ENCODE measurements at regions of chrX and their contacts with region 1.

Region 1: DNA sequence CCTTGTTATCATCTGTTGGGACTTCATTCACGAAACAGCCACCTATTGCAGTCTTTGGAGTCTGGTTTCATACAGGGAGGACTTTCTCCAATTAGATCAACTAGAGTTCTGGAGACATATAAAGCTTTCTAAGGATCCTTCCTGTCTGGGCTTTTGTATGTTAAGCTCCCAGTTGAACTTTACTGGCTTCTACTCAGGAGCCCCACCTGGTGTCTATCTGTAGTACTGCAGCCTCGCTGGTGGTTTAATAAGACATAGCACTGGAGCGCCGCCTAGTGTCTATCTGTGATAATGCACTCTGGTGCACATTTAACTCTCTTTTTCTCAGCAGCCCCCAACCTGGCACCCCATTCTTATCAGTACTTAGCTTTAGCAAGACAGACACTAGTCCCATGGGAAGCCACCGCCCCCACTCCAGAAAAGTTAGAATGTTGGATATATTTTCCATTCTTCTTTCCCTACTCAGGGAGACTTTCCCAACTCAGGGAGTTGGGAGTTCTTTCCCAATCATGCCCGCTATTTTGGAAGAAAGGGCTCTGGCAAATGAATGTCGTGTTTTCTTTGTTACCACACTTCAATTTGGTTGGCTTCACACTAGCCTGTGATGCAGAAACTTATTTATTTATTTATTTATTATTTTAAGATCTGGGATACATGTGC is 36.9 kb upstream of the SYTL4 start:
- DNase-seq: peak; percentile 81 to 86
- H3K4me3 ChIP-seq: no peak overlapping the region
- H3K27ac ChIP-seq: no peak overlapping the region
- H3K4me1 ChIP-seq: no peaks in the 10 kb centered on the region
- H3K27me3 ChIP-seq: no peaks in the 10 kb centered on the region
- CTCF ChIP-seq: peak; percentile 88 to 100 (median 99)
- POLR2A ChIP-seq: no peak

Region 2: DNA sequence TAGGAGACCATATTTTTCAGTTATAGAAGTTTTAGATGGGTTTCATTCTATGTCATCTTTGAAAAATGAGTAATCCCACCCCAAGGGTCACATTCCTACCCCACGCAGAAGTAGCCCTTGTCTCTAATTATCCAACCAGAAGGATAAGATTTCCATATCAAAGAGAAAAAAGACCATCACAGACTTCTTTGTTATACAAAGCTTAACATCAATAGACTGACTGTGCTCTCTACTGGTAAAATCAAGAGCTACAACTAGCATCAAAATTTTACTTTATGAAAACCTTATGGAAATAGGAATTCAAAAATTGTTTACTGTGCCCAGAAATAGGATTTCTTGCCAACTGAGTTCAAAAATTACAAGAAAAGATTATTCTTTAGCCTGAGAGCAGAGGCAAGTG is 159.2 kb before region 1 on chrX:
- intact Hi-C with region 1: no loop called
- DNase-seq: no peak
- H3K4me3 ChIP-seq: no peak overlapping the region
- H3K27ac ChIP-seq: no peak overlapping the region
- H3K4me1 ChIP-seq: no peaks in the 10 kb centered on the region
- H3K27me3 ChIP-seq: no peaks in the 10 kb centered on the region
- CTCF ChIP-seq: no peak
- POLR2A ChIP-seq: no peak

Region 3: GRCh38 chrX:100685284-100685996 is 83.4 kb before region 1 on chrX:
- intact Hi-C with region 1: loop called (anchors 5 kb)
- DNase-seq: peak; percentile 59 to 68
- H3K4me3 ChIP-seq: no peak overlapping the region
- H3K27ac ChIP-seq: no peak overlapping the region
- H3K4me1 ChIP-seq: no peaks in the 10 kb centered on the region
- H3K27me3 ChIP-seq: no peaks in the 10 kb centered on the region
- CTCF ChIP-seq: peak; percentile 46 to 99 (median 89)
- POLR2A ChIP-seq: no peak

Measured in thyroid gland (tissue), 4 donors.